PC-3 (cell line): ENCODE measurements at regions of chr12 and their contacts with region 1.

Region 1: GRCh38 chr12:109428037-109428629 is 49.0 kb downstream of the KCTD10 start:
- DNase-seq: peak; percentile 91
- ATAC-seq: peak; percentile 84
- H3K4me3 ChIP-seq: no peak overlapping the region
- H3K27ac ChIP-seq: no peak overlapping the region
- H3K4me1 ChIP-seq: peaks cover 4% of the 10 kb centered on the region
- H3K27me3 ChIP-seq: 0 out of 2 replicates have a peak, but pooled peaks cover 2% of the 10 kb centered on the region
- CTCF ChIP-seq: peak; percentile 98

Region 2: DNA sequence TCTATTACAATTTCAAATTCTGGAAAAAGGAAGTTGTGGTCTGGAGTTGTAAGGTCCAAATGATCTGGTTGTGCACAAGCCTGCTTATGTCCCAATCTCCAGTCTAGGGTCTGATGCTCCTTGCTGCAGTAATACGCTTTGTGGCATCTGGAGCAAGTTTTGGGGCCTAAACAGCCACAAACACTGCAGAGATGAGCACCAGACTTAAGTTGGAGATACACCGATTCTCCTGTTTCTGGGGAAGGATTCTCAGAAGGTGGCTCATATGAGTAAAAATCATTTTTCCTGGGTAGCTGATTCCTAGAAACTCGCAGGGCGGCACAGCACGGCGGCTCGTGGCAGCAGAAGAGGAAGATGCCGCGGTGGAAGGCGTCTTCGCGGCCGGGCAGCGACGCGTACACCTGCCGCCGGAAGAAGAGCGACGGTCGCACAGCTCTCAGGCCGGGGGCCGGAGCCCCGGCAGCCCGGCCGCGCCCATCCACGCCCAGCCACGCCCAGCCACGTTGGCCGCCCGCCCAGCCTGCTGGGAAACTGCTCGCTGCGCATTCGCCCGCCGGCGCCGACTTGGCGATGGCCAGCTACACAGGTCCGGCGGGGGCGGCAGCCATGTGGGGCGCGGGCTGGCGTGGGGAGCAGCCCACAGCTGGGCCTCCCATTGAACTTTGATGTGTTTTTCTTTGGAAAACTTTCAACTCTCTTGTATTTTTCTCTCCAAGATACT is 1524.6 kb before region 1 on chr12:
- CTCF ChIA-PET with region 1: no interaction called
- POLR2A ChIA-PET with region 1: interaction called, 10 read pairs
- intact Hi-C with region 1: no loop called
- DNase-seq: peak; percentile 90
- ATAC-seq: peak; percentile 95
- H3K4me3 ChIP-seq: peak overlapping the region; percentile 66
- H3K27ac ChIP-seq: no peak overlapping the region
- H3K4me1 ChIP-seq: peaks cover 7% of the 10 kb centered on the region; the same call in 1 of the 2 replicates
- H3K27me3 ChIP-seq: peaks cover 28% of the 10 kb centered on the region
- CTCF ChIP-seq: no peak

Region 3: DNA sequence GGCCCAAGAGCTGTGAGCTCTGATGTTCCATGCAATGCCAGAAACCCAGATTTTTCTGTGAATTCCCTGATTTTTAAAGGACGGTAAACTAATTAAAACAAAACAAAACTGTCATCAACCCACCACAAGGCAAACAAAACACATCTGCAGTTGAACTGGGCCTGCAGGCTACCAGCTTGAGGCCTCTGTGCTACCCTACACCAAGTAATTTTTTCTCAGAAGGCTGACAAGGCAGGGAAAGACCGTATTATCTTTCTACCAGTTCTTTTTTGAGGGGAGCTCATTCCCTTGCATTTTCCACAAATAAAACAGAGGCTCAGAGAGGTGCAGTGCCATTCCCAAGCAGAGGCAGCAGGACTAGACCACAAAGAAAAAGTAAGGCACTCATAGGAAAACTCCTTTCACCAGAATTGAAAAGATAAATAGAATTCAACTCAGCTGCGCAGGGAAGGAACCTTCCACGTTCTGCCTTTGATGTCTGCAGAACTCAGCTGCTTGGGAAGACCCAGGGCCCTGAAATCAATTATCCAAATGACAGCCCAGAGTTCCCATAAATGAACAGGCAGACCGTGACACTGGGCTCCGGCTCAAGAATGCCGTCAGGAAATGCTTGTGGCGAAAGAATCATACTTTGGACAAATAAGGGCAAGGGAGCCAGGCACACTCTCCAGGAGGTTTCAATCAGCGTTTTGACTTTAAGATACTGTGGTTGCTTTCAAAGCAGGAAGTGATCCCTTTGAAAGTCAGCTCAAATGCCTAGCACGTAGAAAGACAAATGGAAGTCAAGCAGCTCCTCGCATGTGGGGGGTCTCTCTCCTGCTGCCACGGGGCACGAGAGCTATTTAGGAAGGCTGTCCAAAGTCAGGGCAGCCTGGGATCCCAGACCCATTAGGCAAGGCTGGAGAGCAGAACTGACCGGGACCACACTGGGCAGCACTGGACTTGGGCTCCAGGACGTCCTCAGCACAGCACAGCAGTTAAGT is 34.9 kb after region 1 on chr12:
- CTCF ChIA-PET with region 1: interaction called, 16 read pairs
- POLR2A ChIA-PET with region 1: no interaction called
- intact Hi-C with region 1: loop called (anchors 1 kb)
- DNase-seq: peak; percentile 94
- ATAC-seq: peak; percentile 77
- H3K4me3 ChIP-seq: peak overlapping the region; percentile 46; the same call in 1 of the 2 replicates
- H3K27ac ChIP-seq: peak overlapping the region; percentile 85
- H3K4me1 ChIP-seq: peaks cover 55% of the 10 kb centered on the region
- H3K27me3 ChIP-seq: no peaks in the 10 kb centered on the region
- CTCF ChIP-seq: no peak

Region 4: GRCh38 chr12:109494348-109494881 is 66.3 kb after region 1 on chr12:
- CTCF ChIA-PET with region 1: interaction called, 8 read pairs
- POLR2A ChIA-PET with region 1: no interaction called
- intact Hi-C with region 1: loop called (anchors 5 kb)
- DNase-seq: peak; percentile 56
- ATAC-seq: peak; percentile 93
- H3K4me3 ChIP-seq: no peak overlapping the region
- H3K27ac ChIP-seq: no peak overlapping the region
- H3K4me1 ChIP-seq: no peaks in the 10 kb centered on the region
- H3K27me3 ChIP-seq: no peaks in the 10 kb centered on the region
- CTCF ChIP-seq: no peak

Region 5: GRCh38 chr12:109775172-109775881 is 347.2 kb after region 1 on chr12:
- CTCF ChIA-PET with region 1: interaction called, 5 read pairs
- POLR2A ChIA-PET with region 1: no interaction called
- intact Hi-C with region 1: loop called (anchors 2 kb)
- DNase-seq: peak; percentile 83
- ATAC-seq: peak; percentile 62
- H3K4me3 ChIP-seq: no peak overlapping the region
- H3K27ac ChIP-seq: no peak overlapping the region
- H3K4me1 ChIP-seq: peaks cover 27% of the 10 kb centered on the region
- H3K27me3 ChIP-seq: no peaks in the 10 kb centered on the region
- CTCF ChIP-seq: peak; percentile 99